Calu3 (cell line): ENCODE measurements at regions of chr3 and their contacts with region 1.

Region 1: GRCh38 chr3:169966428-169966950 is at the start of gene SEC62:
- DNase-seq: peak; percentile 99
- H3K4me3 Mint-ChIP-seq: peak within 1 kb of the TSS; percentile 94
- H3K27ac Mint-ChIP-seq: peak within 1 kb of the TSS; percentile 98
- H3K4me1 Mint-ChIP-seq: peaks cover 26% of the 10 kb centered on the region
- H3K27me3 Mint-ChIP-seq: peaks cover 16% of the 10 kb centered on the region
- CTCF ChIP-seq: peak; percentile 64
- total RNA-seq, gene SEC62: 143 and 148 TPM in 2 replicates

Region 2: DNA sequence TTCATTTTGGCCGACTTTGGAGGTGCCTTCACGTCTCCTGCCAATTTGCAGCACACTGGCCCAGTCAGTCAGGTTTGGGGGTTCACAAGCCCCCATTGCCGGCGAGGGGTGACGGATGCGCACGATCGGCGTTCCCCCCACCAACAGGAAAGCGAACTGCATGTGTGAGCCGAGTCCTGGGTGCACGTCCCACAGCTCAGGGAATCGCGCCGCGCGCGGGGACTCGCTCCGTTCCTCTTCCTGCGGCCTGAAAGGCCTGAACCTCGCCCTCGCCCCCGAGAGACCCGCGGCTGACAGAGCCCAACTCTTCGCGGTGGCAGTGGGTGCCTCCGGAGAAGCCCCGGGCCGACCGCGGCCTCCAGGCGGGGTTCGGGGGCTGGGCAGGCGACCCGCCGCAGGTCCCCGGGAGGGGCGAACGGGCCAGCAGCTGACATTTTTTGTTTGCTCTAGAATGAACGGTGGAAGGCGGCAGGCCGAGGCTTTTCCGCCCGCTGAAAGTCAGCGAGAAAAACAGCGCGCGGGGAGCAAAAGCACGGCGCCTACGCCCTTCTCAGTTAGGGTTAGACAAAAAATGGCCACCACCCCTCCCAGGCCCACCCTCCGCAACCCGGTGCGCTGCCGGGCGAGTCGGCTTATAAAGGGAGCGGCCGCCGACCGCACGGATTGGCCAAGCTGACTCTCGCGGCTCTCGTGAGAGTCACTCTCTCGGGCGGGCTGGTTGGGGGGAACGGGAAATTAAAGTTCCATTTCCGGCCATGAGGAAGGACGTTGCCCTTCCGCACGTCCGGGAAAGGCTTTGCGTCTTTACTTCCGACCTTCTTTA is 201.8 kb before region 1 on chr3 and contains the start of gene TERC:
- CTCF ChIA-PET with region 1: no interaction called
- intact Hi-C with region 1: loop called (anchors 2 kb)
- DNase-seq: peak; percentile 89
- H3K4me3 Mint-ChIP-seq: peak within 1 kb of the TSS; percentile 91
- H3K27ac Mint-ChIP-seq: peak within 1 kb of the TSS; percentile 79
- H3K4me1 Mint-ChIP-seq: peaks cover 11% of the 10 kb centered on the region
- H3K27me3 Mint-ChIP-seq: no peaks in the 10 kb centered on the region
- CTCF ChIP-seq: no peak
- total RNA-seq, gene TERC: 4.7 and 11.0 TPM in 2 replicates

Region 3: GRCh38 chr3:169863458-169863899 is 103.0 kb before region 1 on chr3:
- CTCF ChIA-PET with region 1: no interaction called
- intact Hi-C with region 1: loop called (anchors 1 kb)
- DNase-seq: peak; percentile 88
- H3K4me3 Mint-ChIP-seq: no peak overlapping the region
- H3K27ac Mint-ChIP-seq: no peak overlapping the region
- H3K4me1 Mint-ChIP-seq: peaks cover 3% of the 10 kb centered on the region
- H3K27me3 Mint-ChIP-seq: no peaks in the 10 kb centered on the region
- CTCF ChIP-seq: peak; percentile 96

Region 4: DNA sequence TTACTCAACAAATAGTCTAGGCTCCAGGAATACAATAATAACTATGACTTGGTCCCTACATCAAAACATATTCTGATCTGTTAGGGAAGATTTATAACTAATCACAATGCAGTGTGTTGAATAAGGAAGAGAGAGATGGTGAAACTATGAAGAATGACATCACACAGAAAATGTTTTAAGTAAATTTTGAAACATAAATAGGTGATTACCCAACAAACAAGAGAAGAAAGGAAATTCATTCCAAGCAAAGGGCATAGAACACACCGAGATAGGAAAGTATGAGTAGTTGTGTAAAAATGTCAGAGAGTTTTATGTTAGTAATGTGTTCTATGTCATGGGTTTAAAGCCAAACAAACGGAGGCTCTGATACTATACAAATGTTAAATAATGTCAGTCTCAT is 13.6 kb after region 1 on chr3:
- CTCF ChIA-PET with region 1: no interaction called
- intact Hi-C with region 1: loop called (anchors 2 kb)
- DNase-seq: no peak
- H3K4me3 Mint-ChIP-seq: no peak overlapping the region
- H3K27ac Mint-ChIP-seq: peak overlapping the region; percentile 1
- H3K4me1 Mint-ChIP-seq: peaks cover 14% of the 10 kb centered on the region
- H3K27me3 Mint-ChIP-seq: no peaks in the 10 kb centered on the region
- CTCF ChIP-seq: no peak

Region 5: GRCh38 chr3:170089862-170090600 is 123.5 kb after region 1 on chr3:
- CTCF ChIA-PET with region 1: no interaction called
- intact Hi-C with region 1: no loop called
- DNase-seq: no peak
- H3K4me3 Mint-ChIP-seq: no peak overlapping the region
- H3K27ac Mint-ChIP-seq: peak overlapping the region; percentile 15
- H3K4me1 Mint-ChIP-seq: no peaks in the 10 kb centered on the region
- H3K27me3 Mint-ChIP-seq: no peaks in the 10 kb centered on the region
- CTCF ChIP-seq: no peak